GM10248 (cell line): ENCODE measurements at regions of chr1 and their contacts with region 1.

Region 1: GRCh38 chr1:119613769-119614720 is 34.0 kb downstream of the ZNF697 start:
- DNase-seq: peak; percentile 67
- CTCF ChIP-seq: peak; percentile 75

Region 2: GRCh38 chr1:119626841-119627240 is 12.8 kb after region 1 on chr1:
- CTCF ChIA-PET with region 1: interaction called, 28 read pairs
- POLR2A ChIA-PET with region 1: no interaction called
- DNase-seq: no peak
- CTCF ChIP-seq: no peak

Region 3: DNA sequence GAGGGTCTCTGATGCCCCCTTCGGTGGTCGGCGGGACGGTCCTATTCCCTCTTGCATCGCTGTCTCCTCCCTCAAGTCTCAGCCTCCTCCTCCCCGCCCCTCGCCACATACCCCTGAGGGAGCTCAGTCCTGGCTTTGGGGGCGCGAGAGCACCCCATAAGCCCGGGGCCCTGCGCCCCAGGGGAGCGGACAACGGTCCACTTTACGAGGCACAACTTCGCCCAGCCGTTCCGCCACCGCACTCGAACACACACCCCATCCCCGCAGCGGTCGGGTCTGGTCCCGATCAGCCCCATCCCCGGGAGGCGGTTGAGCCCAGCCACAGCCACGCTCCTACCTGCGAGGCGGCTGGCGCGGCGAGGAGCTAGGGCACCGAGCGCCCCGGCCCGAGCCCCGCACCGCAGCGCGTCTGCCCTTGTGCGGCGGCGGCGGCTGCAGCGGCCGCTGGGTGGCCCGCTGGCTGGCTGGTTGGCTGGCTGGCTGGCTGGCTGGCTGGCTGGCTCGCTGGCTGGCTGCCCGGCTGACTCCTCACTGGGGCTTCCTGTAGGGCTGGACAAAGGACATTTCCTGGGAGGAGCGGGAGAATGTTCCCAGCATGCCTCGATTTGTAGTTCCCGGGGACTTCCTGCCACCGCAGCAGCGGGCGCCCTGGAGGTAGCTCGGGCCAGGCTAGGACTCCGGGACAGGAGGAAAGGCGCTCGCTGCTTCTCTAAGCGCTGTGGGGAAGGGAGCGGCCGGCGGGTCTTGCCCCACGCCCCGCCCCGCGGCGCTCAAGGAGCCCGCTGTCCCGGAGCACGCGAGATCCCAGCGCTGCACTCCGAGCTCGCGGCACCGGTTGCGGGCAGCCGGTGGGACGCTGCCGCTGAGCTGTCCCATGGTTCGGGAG is 33.9 kb after region 1 on chr1 and contains the start of gene ZNF697:
- CTCF ChIA-PET with region 1: interaction called, 1,134 read pairs
- POLR2A ChIA-PET with region 1: no interaction called
- DNase-seq: peak; percentile 82
- CTCF ChIP-seq: no peak

Region 4: GRCh38 chr1:119773711-119774241 is 159.7 kb after region 1 on chr1:
- CTCF ChIA-PET with region 1: no interaction called
- POLR2A ChIA-PET with region 1: no interaction called
- DNase-seq: no peak
- CTCF ChIP-seq: no peak